Activated CD8-positive, alpha-beta memory T cell treated with anti-CD3 and anti-CD28 coated beads, Interleukin-2, amount 10 ng/mL, durations not matched to agents 7 days and 5 days (primary cell): ENCODE measurements at regions of chr10 and their contacts with region 1.

Region 1: GRCh38 chr10:79195091-79195923 is 126.5 kb downstream of the ZMIZ1 start:
- DNase-seq: peak; percentile 85
- ATAC-seq: peak; percentile 91
- H3K4me3 Mint-ChIP-seq: no peak overlapping the region
- H3K27ac Mint-ChIP-seq: no peak overlapping the region
- H3K4me1 Mint-ChIP-seq: no peaks in the 10 kb centered on the region
- H3K27me3 Mint-ChIP-seq: no peaks in the 10 kb centered on the region

Region 2: GRCh38 chr10:78047314-78047891 is 1147.9 kb before region 1 on chr10:
- CTCF ChIA-PET with region 1: interaction called, 29 read pairs
- DNase-seq: peak; percentile 89
- ATAC-seq: peak; percentile 86
- H3K4me3 Mint-ChIP-seq: no peak overlapping the region
- H3K27ac Mint-ChIP-seq: no peak overlapping the region
- H3K4me1 Mint-ChIP-seq: peaks cover 27% of the 10 kb centered on the region
- H3K27me3 Mint-ChIP-seq: no peaks in the 10 kb centered on the region

Region 3: DNA sequence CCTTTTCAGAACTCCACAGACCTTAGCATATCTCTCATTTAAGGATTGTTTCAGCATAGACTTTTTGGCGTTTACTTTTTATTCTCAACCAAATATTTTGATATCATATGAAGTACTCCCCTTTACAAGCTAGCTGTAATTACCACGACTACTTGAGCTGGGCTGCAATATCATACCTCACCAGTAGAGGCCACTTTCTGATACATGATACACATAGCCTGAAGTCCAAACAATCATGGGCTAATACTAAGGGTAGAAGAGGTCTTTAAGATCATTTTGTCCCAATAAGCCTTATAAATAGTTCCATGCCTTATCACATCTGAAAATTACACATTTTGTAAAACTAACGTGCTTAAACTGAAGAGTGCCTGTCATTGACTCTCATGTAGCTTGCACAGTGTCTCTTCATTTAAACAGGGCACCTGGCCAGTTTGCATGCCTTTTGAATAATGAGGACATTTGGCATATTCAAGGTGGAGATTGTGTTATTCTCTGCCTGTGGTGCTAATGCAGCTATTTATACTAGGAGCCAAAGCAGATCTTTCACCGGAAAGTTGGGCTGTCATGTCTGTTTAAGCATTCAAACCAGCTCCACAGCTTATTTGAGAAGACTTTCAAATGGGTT is 530.3 kb before region 1 on chr10:
- CTCF ChIA-PET with region 1: interaction called, 13 read pairs
- DNase-seq: no peak
- ATAC-seq: no peak
- H3K4me3 Mint-ChIP-seq: no peak overlapping the region
- H3K27ac Mint-ChIP-seq: no peak overlapping the region
- H3K4me1 Mint-ChIP-seq: no peaks in the 10 kb centered on the region
- H3K27me3 Mint-ChIP-seq: peaks cover 58% of the 10 kb centered on the region

Region 4: GRCh38 chr10:78852466-78853240 is 342.7 kb before region 1 on chr10:
- CTCF ChIA-PET with region 1: interaction called, 14 read pairs
- DNase-seq: no peak
- ATAC-seq: no peak
- H3K4me3 Mint-ChIP-seq: no peak overlapping the region
- H3K27ac Mint-ChIP-seq: no peak overlapping the region
- H3K4me1 Mint-ChIP-seq: no peaks in the 10 kb centered on the region
- H3K27me3 Mint-ChIP-seq: no peaks in the 10 kb centered on the region

Region 5: DNA sequence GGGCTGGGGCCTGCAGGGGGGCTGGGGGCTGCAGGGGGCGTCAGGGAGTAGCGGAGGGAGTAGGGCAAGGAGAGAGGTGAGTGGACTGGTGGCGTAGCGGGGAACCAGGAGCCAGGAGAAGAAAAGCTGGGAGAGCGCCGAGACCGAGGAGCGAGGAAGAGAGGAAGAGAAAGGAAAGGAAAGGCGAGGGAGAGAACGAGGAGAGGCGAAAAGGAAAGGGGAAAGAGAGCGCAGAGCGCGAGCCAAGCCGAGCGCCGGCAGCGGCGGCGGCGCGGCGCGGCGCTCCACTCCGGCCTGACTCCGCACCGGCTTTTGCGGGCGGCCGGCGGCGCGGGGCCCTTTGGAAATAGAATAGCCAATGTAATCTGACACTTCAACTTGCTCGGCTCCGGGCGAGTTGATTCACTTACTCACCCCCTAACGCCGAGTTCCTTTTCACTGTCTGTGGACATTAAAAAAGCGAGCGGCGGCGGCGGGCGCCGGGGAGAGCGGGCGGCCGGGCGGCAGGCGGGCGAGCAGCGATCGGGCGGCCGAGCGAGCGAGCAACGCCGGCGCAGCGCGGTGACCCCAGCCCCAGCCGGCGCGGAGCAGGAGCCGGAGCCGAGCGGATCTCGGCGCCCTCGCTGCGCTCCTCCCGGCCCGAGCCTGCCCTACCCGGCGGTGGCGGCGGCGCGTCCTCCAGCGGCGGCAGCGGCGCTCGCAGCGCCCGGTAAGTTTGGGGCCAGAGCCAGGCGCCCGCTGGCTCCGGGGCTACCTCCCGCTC is 126.6 kb before region 1 on chr10 and contains the start of gene ZMIZ1:
- CTCF ChIA-PET with region 1: interaction called, 27 read pairs
- DNase-seq: peak; percentile 88
- ATAC-seq: peak; percentile 68
- H3K4me3 Mint-ChIP-seq: peak within 1 kb of the TSS; percentile 91
- H3K27ac Mint-ChIP-seq: peak within 1 kb of the TSS; percentile 77
- H3K4me1 Mint-ChIP-seq: peaks cover 24% of the 10 kb centered on the region
- H3K27me3 Mint-ChIP-seq: peaks cover 20% of the 10 kb centered on the region
- total RNA-seq, gene ZMIZ1: 52.7 to 71.5 TPM

Region 6: DNA sequence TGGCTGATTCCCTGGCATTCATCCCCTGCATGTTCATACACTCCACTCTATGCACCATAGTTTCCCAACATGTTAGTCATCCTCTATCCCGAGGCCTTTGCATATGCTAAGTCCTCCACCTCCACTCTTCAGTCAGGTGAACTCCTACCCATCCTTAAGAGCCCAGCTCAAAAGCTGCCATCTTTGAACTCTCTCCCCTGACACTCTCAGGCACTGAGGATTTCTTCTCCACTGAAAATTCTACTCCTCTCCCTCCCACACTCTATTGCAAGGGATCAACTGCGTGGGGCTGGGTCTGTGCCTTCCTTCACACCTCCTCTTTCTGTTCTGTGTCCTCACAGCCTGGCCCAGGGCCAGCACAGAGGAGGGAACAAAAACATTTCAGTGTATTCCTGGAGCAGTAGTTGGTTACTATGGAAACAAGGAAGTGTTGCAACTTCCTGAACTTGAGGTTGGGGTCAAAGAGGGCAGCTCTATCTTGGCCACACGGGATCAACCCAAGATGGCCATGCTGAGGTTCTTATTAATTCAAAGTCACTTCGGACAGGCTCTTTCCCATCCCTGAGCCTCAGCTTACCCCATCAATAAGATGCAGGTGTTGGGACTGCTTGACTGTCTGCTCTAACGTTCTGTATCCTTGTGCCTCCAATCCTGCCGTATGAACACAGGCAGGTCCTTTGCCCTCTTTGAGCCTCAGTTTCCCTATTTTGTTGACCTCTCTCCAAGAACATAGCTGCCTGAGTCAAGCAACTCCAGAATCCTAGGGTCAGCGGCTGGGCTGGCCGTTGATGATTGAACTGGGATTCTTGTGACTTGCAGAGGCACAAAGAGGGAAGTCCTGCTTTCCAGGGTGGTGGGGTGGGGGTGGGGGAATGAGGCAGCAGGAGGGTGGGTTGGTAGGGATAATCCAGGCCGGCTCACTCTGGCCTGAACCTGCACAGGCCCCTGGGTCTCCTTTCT is 111.0 kb before region 1 on chr10:
- CTCF ChIA-PET with region 1: interaction called, 15 read pairs
- DNase-seq: no peak
- ATAC-seq: peak; percentile 54
- H3K4me3 Mint-ChIP-seq: no peak overlapping the region
- H3K27ac Mint-ChIP-seq: peak overlapping the region; percentile 5
- H3K4me1 Mint-ChIP-seq: peaks cover 17% of the 10 kb centered on the region
- H3K27me3 Mint-ChIP-seq: no peaks in the 10 kb centered on the region

Region 7: GRCh38 chr10:79184145-79184625 is 11.1 kb before region 1 on chr10:
- CTCF ChIA-PET with region 1: interaction called, 15 read pairs
- DNase-seq: no peak
- ATAC-seq: no peak
- H3K4me3 Mint-ChIP-seq: no peak overlapping the region
- H3K27ac Mint-ChIP-seq: no peak overlapping the region
- H3K4me1 Mint-ChIP-seq: no peaks in the 10 kb centered on the region
- H3K27me3 Mint-ChIP-seq: no peaks in the 10 kb centered on the region